ENCODE measurements at regions of chr1 and their contacts with region 1.

Region 1: GRCh38 chr1:151594143-151594625 is 17.7 kb upstream of the SNX27 start:
- DNase-seq: peak; percentile 93
- ATAC-seq: peak; percentile 97
- H3K4me3 ChIP-seq: no peak overlapping the region
- H3K27ac ChIP-seq: no peak overlapping the region
- H3K4me1 ChIP-seq: peaks cover 5% of the 10 kb centered on the region
- H3K27me3 ChIP-seq: no peaks in the 10 kb centered on the region
- CTCF ChIP-seq: peak; percentile 94

Region 2: GRCh38 chr1:151739590-151740375 is 145.6 kb after region 1 on chr1:
- intact Hi-C with region 1: loop called (anchors 10 kb)
- DNase-seq: no peak
- ATAC-seq: peak; percentile 44
- H3K4me3 ChIP-seq: no peak overlapping the region
- H3K27ac ChIP-seq: no peak overlapping the region
- H3K4me1 ChIP-seq: peaks cover 4% of the 10 kb centered on the region
- H3K27me3 ChIP-seq: no peaks in the 10 kb centered on the region
- CTCF ChIP-seq: no peak